Activated CD4-positive, alpha-beta memory T cell treated with anti-CD3 and anti-CD28 coated beads for 36 hours (primary cell): ENCODE measurements at regions of chr1 and their contacts with region 1.

Region 1: GRCh38 chr1:217482356-217483102 is 148.4 kb downstream of the GPATCH2 start:
- DNase-seq: peak; percentile 82
- H3K4me3 Mint-ChIP-seq: no peak overlapping the region
- H3K27ac Mint-ChIP-seq: peak overlapping the region; percentile 55
- H3K4me1 Mint-ChIP-seq: peaks cover 23% of the 10 kb centered on the region
- H3K27me3 Mint-ChIP-seq: no peaks in the 10 kb centered on the region

Region 2: DNA sequence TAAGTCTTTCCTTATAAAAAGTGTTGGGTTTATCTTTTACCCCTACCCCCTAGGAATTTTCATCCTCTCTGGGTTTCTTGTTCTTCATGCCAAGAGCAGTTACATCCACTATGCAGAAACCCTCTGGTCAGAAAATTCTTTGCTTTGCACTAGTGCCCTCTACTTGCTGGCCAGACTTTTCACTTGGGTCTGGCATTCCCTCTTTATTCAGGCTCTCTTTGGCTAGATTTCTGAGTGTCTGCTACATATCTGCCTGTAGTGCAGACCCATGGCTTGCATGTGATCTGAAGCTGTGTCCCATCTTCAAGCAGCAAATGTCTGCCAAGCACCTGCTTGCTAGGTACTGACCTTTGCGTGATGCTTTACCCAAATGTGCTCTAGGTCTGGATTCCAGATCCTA is 88.6 kb before region 1 on chr1:
- CTCF ChIA-PET with region 1: no interaction called
- POLR2A ChIA-PET with region 1: no interaction called
- intact Hi-C with region 1: no loop called
- DNase-seq: no peak
- H3K4me3 Mint-ChIP-seq: no peak overlapping the region
- H3K27ac Mint-ChIP-seq: no peak overlapping the region
- H3K4me1 Mint-ChIP-seq: no peaks in the 10 kb centered on the region
- H3K27me3 Mint-ChIP-seq: no peaks in the 10 kb centered on the region

Region 3: GRCh38 chr1:217469983-217470382 is 12.5 kb before region 1 on chr1:
- CTCF ChIA-PET with region 1: no interaction called
- POLR2A ChIA-PET with region 1: no interaction called
- intact Hi-C with region 1: no loop called
- DNase-seq: no peak
- H3K4me3 Mint-ChIP-seq: no peak overlapping the region
- H3K27ac Mint-ChIP-seq: no peak overlapping the region
- H3K4me1 Mint-ChIP-seq: no peaks in the 10 kb centered on the region
- H3K27me3 Mint-ChIP-seq: no peaks in the 10 kb centered on the region

Region 4: DNA sequence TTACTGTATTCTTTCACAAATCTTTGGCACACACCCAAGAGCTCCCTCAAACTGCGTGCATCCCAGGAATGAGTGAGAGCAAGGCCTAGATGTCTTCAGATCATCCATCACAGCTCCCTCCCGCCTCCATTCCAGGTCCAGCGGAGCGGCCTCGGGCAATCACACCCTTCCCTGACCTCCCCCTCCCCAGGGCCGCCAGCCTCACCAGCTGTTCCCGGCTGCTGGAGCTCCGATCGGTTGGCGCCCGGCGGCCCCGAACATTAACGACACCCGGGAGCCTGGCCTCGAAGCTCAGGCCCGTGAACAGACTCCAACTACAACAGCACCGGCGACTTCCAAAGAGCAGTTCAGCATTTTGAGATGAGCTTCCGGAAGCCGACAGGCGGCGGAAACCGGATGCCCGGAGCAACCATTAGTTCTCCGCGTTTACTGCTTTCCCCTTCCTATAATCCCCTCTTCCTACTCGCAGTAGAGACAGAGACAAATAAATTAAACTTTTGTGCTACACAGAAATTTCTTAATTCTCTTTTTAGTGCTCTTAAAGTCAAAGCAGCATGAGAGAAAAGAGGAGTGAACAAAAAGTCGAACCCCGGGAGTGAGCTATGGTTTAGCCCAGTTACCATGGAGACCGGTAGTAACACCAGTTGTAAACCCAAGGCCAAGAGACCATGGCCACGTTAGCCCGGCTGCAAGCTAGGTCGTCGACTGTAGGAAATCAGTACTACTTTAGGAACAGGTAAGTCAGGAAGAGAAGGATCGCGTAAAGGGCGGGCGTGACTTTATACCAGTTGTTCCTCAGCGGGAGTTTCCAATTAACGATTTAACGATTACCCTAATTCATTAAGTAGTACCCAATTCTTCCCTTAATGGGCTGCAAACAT is 148.4 kb after region 1 on chr1 and contains the starts of genes GPATCH2 and SPATA17:
- CTCF ChIA-PET with region 1: no interaction called
- POLR2A ChIA-PET with region 1: interaction called, 3 read pairs
- intact Hi-C with region 1: loop called (anchors 1 kb)
- DNase-seq: peak; percentile 83
- H3K4me3 Mint-ChIP-seq: peak within 1 kb of the TSS; percentile 88
- H3K27ac Mint-ChIP-seq: peak within 1 kb of the TSS; percentile 96
- H3K4me1 Mint-ChIP-seq: peaks cover 28% of the 10 kb centered on the region
- H3K27me3 Mint-ChIP-seq: peaks cover 2% of the 10 kb centered on the region
- total RNA-seq, gene GPATCH2: 7.8 to 7.9 TPM
- total RNA-seq, gene SPATA17: not detected